ENCODE measurements at regions of chr12 and their contacts with region 1.

Region 1: GRCh38 chr12:6825398-6826124 is 2.6 kb upstream of the P3H3 start:
- DNase-seq: peak; percentile 95
- ATAC-seq: peak; percentile 35
- H3K4me3 Mint-ChIP-seq: peak overlapping the region; percentile 78
- H3K27ac Mint-ChIP-seq: no peak overlapping the region
- H3K4me1 Mint-ChIP-seq: peaks cover 60% of the 10 kb centered on the region
- H3K27me3 Mint-ChIP-seq: peaks cover 45% of the 10 kb centered on the region
- CTCF ChIP-seq: peak; percentile 90

Region 2: GRCh38 chr12:6676962-6677361 is 148.6 kb before region 1 on chr12:
- CTCF ChIA-PET with region 1: no interaction called
- POLR2A ChIA-PET with region 1: no interaction called
- DNase-seq: no peak
- ATAC-seq: no peak
- H3K4me3 Mint-ChIP-seq: no peak overlapping the region
- H3K27ac Mint-ChIP-seq: no peak overlapping the region
- H3K4me1 Mint-ChIP-seq: no peaks in the 10 kb centered on the region
- H3K27me3 Mint-ChIP-seq: no peaks in the 10 kb centered on the region
- CTCF ChIP-seq: no peak

Region 3: GRCh38 chr12:6778574-6779550 is 46.7 kb before region 1 on chr12:
- CTCF ChIA-PET with region 1: interaction called, 110 read pairs
- POLR2A ChIA-PET with region 1: interaction called, 4 read pairs
- DNase-seq: peak; percentile 97
- ATAC-seq: peak; percentile 92
- H3K4me3 Mint-ChIP-seq: peak overlapping the region; percentile 95
- H3K27ac Mint-ChIP-seq: peak overlapping the region; percentile 77
- H3K4me1 Mint-ChIP-seq: peaks cover 30% of the 10 kb centered on the region
- H3K27me3 Mint-ChIP-seq: peaks cover 44% of the 10 kb centered on the region
- CTCF ChIP-seq: peak; percentile 88

Region 4: GRCh38 chr12:6810758-6811157 is 14.8 kb before region 1 on chr12:
- CTCF ChIA-PET with region 1: interaction called, 14 read pairs
- POLR2A ChIA-PET with region 1: interaction called, 3 read pairs
- DNase-seq: no peak
- ATAC-seq: peak; percentile 44; the same call in 1 of the 2 replicates
- H3K4me3 Mint-ChIP-seq: no peak overlapping the region
- H3K27ac Mint-ChIP-seq: peak overlapping the region; percentile 36
- H3K4me1 Mint-ChIP-seq: peaks cover 18% of the 10 kb centered on the region
- H3K27me3 Mint-ChIP-seq: peaks cover 48% of the 10 kb centered on the region
- CTCF ChIP-seq: no peak